Activated naive CD4-positive, alpha-beta T cell treated with anti-CD3 and anti-CD28 coated beads for 36 hours (primary cell): ENCODE measurements at regions of chr17 and their contacts with region 1.

Region 1: GRCh38 chr17:16285957-16286640 is 67.2 kb downstream of the CENPV start:
- DNase-seq: peak; percentile 90
- H3K4me3 Mint-ChIP-seq: peak overlapping the region; percentile 67
- H3K27ac Mint-ChIP-seq: peak overlapping the region; percentile 95
- H3K4me1 Mint-ChIP-seq: peaks cover 47% of the 10 kb centered on the region
- H3K27me3 Mint-ChIP-seq: no peaks in the 10 kb centered on the region

Region 2: DNA sequence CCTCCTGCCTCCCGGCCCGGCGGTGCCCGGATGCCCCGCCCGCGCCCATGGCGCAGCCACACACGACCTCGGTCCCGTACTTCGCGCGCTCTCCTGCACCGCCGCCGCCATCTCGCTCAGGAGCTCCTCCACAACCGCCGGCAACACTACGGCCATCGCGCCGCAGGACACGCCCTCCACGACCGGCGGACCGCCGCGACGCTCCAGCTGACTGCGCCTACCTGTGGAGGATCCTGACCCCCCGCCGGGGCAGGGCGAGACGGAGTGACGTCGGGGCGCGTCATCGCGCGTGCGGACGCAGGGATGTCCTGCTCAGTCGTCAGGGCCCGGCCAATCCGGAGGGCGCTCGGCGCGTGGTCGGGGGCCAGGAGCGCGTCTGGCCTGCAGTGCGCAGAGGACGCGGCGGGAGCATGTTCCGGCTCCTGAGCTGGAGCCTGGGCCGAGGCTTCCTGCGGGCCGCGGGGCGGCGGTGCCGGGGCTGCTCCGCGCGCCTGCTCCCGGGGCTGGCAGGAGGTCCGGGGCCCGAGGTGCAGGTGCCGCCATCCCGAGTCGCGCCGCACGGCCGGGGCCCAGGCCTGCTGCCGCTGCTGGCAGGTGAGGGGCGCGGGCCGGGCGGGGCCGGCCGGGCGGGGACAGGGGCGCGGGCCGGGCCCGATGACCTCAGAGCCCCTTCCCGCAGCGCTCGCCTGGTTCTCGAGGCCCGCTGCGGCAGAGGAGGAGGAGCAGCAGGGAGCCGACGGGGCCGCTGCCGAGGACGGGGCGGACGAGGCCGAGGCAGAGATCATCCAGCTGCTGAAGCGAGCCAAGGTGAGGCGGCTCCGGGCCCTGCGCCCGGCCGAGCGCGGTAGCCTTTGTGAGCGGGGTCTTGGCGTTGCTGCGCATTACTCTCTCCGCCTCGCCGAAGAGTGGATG is 286.4 kb before region 1 on chr17 and contains the starts of genes TTC19 and ZSWIM7:
- CTCF ChIA-PET with region 1: no interaction called
- intact Hi-C with region 1: loop called (anchors 5 kb)
- DNase-seq: peak; percentile 93
- H3K4me3 Mint-ChIP-seq: peak within 1 kb of the TSS; percentile 98
- H3K27ac Mint-ChIP-seq: peak within 1 kb of the TSS; percentile 92
- H3K4me1 Mint-ChIP-seq: peaks cover 23% of the 10 kb centered on the region
- H3K27me3 Mint-ChIP-seq: no peaks in the 10 kb centered on the region
- total RNA-seq, gene TTC19: 18.8 to 20.8 TPM
- total RNA-seq, gene ZSWIM7: 8.3 to 10.8 TPM

Region 3: DNA sequence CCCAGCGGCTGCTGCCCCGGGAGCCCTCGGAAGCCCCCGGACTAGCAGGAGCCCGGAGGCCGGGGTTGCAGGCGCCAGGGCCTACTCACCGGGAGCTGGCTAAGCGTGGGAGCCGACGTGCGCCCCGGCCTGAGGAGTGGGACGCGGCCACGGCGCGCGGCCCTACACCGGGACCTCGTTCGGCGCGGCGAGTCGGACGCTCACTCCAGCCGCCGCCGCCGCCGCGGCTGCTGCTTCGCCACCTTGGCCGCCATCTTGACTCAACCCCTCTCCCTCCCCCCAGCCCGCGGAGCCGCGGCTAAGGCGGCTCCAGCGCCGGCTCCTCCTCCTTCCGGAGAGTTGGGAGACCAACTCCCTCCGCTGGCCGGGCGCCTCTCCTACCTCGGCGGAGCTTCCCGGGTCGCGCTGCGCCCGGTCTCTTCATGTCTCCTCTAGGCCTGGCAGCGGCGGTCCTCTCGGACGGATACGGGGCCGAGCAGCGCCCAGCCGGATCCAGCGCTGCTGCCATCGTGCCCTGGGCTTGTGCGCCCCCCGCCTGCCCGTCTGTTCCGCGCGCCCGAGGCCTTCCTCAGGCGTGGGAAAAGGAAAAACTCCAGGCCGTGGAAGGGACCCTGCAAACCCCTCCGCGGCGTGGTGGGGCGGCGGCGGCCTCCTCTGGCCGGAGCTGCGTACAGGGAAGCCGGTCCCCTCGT is 70.7 kb before region 1 on chr17 and contains the start of gene NCOR1:
- CTCF ChIA-PET with region 1: interaction called, 7 read pairs
- intact Hi-C with region 1: loop called (anchors 1 kb)
- DNase-seq: peak; percentile 93
- H3K4me3 Mint-ChIP-seq: peak within 1 kb of the TSS; percentile 99
- H3K27ac Mint-ChIP-seq: peak within 1 kb of the TSS; percentile 95
- H3K4me1 Mint-ChIP-seq: peaks cover 44% of the 10 kb centered on the region
- H3K27me3 Mint-ChIP-seq: no peaks in the 10 kb centered on the region
- total RNA-seq, gene NCOR1: 101 to 104 TPM

Region 4: GRCh38 chr17:16267174-16267573 is 18.9 kb before region 1 on chr17:
- CTCF ChIA-PET with region 1: no interaction called
- intact Hi-C with region 1: loop called (anchors 2 kb)
- DNase-seq: no peak
- H3K4me3 Mint-ChIP-seq: no peak overlapping the region
- H3K27ac Mint-ChIP-seq: no peak overlapping the region
- H3K4me1 Mint-ChIP-seq: peaks cover 22% of the 10 kb centered on the region
- H3K27me3 Mint-ChIP-seq: no peaks in the 10 kb centered on the region

Region 5: DNA sequence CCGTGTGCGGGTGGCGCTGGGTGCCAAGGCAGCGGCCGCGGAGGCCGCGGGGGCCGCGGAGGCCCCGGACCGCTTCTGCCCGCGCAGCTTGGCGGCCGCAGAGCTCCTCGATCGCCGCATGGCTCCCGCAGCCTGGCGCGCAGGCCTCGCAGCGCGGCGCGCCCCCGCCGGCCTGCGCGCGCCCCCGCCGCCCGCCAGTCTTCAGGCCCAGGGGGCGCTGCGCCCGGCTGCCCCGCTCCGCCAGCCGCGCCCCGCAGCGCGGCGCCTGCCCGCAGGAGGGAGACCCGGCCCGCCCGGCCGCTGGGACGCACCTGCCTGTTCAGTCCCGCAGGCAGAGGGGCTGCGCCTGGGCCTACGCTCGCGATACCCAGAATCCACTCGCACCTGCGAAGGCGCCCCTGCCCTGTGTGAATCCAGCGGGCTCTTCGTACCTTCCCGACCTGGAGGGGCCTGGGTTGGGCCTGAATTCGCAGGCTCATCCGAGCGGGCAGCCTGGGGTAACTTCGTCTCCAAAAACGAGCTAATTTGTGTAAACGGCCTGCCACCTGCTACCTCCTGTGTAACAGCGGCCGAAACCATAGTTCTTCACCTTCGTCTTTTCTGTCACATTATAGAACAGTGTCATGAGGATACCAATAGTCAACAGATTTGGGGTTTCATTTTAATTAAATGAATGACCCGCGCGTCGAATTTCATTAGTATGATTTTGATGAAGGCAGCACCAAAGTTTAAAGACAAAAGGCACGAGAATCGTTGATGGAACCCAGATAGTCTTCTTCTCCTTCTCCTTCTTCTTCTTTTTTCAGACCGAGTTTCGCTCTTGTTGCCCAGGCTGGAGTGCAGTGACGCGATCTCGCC is 67.4 kb after region 1 on chr17 and contains the start of gene CENPV:
- CTCF ChIA-PET with region 1: interaction called, 4 read pairs
- intact Hi-C with region 1: loop called (anchors 2 kb)
- DNase-seq: peak; percentile 62
- H3K4me3 Mint-ChIP-seq: peak within 1 kb of the TSS; percentile 96
- H3K27ac Mint-ChIP-seq: peak within 1 kb of the TSS; percentile 77
- H3K4me1 Mint-ChIP-seq: peaks cover 22% of the 10 kb centered on the region
- H3K27me3 Mint-ChIP-seq: no peaks in the 10 kb centered on the region
- total RNA-seq, gene CENPV: 117 to 121 TPM

Region 6: DNA sequence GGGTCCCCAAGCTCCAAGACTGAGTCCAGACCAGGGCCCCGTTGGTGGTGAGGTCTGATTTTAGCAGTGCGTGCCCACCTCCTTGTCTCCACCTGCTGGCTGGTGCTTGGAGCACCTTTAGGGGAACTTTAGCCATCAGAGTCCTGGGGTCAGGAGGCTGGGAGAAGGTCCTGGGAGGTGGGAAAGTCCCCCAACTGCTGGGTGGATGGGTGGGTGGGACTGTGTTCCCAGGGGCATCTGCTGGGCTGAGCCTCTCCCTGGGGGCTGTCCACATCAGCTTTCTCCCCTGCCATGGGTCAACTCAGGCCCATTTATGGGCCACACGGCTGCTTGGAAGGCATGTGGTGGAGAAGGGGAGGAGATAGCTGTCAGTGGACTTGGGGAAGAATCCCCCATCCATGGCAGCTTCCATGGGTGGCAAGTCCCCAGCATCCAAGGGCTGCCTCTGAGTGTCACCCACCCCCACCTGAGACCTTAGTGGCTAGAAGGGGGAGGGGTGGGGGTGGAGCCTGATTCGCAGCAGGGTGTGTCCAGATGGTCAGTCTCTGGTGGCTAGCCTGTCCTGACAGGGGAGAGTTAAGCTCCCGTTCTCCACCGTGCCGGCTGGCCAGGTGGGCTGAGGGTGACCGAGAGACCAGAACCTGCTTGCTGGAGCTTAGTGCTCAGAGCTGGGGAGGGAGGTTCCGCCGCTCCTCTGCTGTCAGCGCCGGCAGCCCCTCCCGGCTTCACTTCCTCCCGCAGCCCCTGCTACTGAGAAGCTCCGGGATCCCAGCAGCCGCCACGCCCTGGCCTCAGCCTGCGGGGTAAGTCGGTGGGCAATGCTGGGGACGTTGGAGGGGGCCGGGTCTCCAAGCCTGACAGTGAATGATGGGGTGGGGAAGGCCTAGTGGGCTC is 129.2 kb after region 1 on chr17 and contains the start of gene TRPV2:
- CTCF ChIA-PET with region 1: no interaction called
- intact Hi-C with region 1: loop called (anchors 1 kb)
- DNase-seq: peak; percentile 67
- H3K4me3 Mint-ChIP-seq: peak within 1 kb of the TSS; percentile 98
- H3K27ac Mint-ChIP-seq: peak within 1 kb of the TSS; percentile 100
- H3K4me1 Mint-ChIP-seq: peaks cover 43% of the 10 kb centered on the region
- H3K27me3 Mint-ChIP-seq: no peaks in the 10 kb centered on the region
- total RNA-seq, gene TRPV2: 23.7 to 24.8 TPM

Region 7: GRCh38 chr17:16653209-16654041 is 367.3 kb after region 1 on chr17 and contains the start of gene ZNF624:
- CTCF ChIA-PET with region 1: no interaction called
- intact Hi-C with region 1: loop called (anchors 5 kb)
- DNase-seq: peak; percentile 91
- H3K4me3 Mint-ChIP-seq: peak within 1 kb of the TSS; percentile 82
- H3K27ac Mint-ChIP-seq: peak within 1 kb of the TSS; percentile 33
- H3K4me1 Mint-ChIP-seq: peaks cover 17% of the 10 kb centered on the region
- H3K27me3 Mint-ChIP-seq: peaks cover 2% of the 10 kb centered on the region
- total RNA-seq, gene ZNF624: 3.9 TPM